H1 (cell line): ENCODE measurements at regions of chr5 and their contacts with region 1.

Region 1: GRCh38 chr5:73945498-73945897 is 319.5 kb downstream of the ARHGEF28 start:
- DNase-seq: peak in 1 of 2 experiments; percentile 76
- H3K4me3 ChIP-seq: no peak overlapping the region
- H3K27ac ChIP-seq: no peak overlapping the region
- H3K4me1 ChIP-seq: no peaks in the 10 kb centered on the region
- H3K27me3 ChIP-seq: no peaks in the 10 kb centered on the region
- CTCF ChIP-seq: peak; percentile 50 to 72 (median 69)
- EP300 ChIP-seq: no peak
- POLR2A ChIP-seq: no peak
- RAD21 ChIP-seq: peak; percentile 44 to 61

Region 2: DNA sequence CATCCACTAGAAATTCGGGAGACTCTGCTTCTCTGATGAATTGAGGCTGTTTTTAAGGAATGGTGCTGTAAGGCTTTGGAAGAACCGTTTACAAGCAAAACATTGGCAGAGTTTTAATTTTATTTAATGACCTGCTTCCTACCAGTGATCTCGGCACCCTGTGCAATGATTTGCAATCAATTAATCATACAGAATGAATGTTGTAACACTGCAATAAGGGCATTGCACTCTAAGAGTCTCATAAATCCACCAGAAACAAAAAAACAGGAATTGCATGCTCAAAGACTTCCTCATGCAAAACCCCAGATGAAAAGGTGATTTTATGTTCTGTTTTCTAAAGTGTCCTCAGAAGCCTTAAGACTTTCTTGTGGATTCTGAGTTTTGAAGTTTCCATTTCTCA is 23.8 kb before region 1 on chr5:
- CTCF ChIA-PET with region 1: interaction called, 12 read pairs
- POLR2A ChIA-PET with region 1: no interaction called
- DNase-seq: no peak
- H3K4me3 ChIP-seq: no peak overlapping the region
- H3K27ac ChIP-seq: no peak overlapping the region
- H3K4me1 ChIP-seq: peaks cover 0 to 3% (median 2%) of the 10 kb centered on the region in 4 experiments; a peak in 1 of 7 replicates
- H3K27me3 ChIP-seq: no peaks in the 10 kb centered on the region; a peak in 1 of 7 replicates
- CTCF ChIP-seq: no peak
- EP300 ChIP-seq: no peak
- POLR2A ChIP-seq: no peak
- RAD21 ChIP-seq: no peak

Region 3: GRCh38 chr5:73974871-73975360 is 29.4 kb after region 1 on chr5:
- CTCF ChIA-PET with region 1: interaction called, 11 read pairs
- POLR2A ChIA-PET with region 1: no interaction called
- DNase-seq: no peak
- H3K4me3 ChIP-seq: no peak overlapping the region
- H3K27ac ChIP-seq: no peak overlapping the region
- H3K4me1 ChIP-seq: no peaks in the 10 kb centered on the region
- H3K27me3 ChIP-seq: no peaks in the 10 kb centered on the region
- CTCF ChIP-seq: no peak
- EP300 ChIP-seq: no peak
- POLR2A ChIP-seq: no peak
- RAD21 ChIP-seq: no peak